Activated naive CD4-positive, alpha-beta T cell treated with anti-CD3 and anti-CD28 coated beads for 36 hours (primary cell): ENCODE measurements at regions of chr9 and their contacts with region 1.

Region 1: GRCh38 chr9:127244609-127245601 is 19.7 kb upstream of the GARNL3 start:
- DNase-seq: peak; percentile 98
- H3K4me3 Mint-ChIP-seq: peak overlapping the region; percentile 83
- H3K27ac Mint-ChIP-seq: no peak overlapping the region
- H3K4me1 Mint-ChIP-seq: peaks cover 5% of the 10 kb centered on the region
- H3K27me3 Mint-ChIP-seq: no peaks in the 10 kb centered on the region

Region 2: DNA sequence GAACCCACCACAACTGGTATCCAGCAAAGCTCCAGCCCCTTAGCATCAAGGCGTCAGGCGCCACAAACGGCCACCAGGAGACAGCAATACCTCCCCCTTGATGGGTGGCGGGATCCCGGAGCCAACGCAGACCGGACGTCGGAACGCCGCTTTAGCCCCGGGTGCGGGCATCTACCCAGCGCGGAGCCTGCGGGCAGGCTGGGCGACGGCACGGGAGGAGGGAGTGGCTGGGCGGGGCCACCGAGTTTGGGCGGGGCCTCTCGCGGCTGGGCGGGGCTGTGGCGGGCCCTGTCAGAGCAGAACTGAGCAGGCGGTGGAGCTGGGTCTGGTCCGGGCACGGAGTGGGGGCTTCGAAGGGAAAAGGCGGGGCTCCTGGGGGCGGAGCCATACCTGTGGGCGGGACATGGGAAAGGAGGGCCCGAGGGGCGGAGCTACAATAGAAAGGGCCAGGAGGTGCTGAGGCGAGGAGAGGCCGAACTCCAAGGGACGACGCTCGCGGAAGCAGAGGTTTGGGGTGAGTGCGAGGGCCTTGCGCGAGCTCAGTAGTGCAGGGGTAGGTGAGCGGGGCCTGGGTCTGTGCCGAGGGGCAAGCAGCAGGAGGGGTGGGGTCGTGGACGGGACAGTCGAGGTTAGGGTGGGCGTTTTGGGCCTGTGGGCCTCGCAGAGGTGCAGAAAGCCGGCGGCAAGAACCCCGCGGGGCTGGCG is 20.6 kb before region 1 on chr9:
- CTCF ChIA-PET with region 1: interaction called, 3 read pairs
- intact Hi-C with region 1: loop called (anchors 1 kb)
- DNase-seq: peak; percentile 85
- H3K4me3 Mint-ChIP-seq: peak overlapping the region; percentile 73
- H3K27ac Mint-ChIP-seq: no peak overlapping the region
- H3K4me1 Mint-ChIP-seq: peaks cover 28% of the 10 kb centered on the region
- H3K27me3 Mint-ChIP-seq: peaks cover 9% of the 10 kb centered on the region

Region 3: GRCh38 chr9:127263664-127264063 is 18.8 kb after region 1 on chr9:
- CTCF ChIA-PET with region 1: no interaction called
- intact Hi-C with region 1: no loop called
- DNase-seq: no peak
- H3K4me3 Mint-ChIP-seq: no peak overlapping the region
- H3K27ac Mint-ChIP-seq: no peak overlapping the region
- H3K4me1 Mint-ChIP-seq: no peaks in the 10 kb centered on the region
- H3K27me3 Mint-ChIP-seq: no peaks in the 10 kb centered on the region

Region 4: DNA sequence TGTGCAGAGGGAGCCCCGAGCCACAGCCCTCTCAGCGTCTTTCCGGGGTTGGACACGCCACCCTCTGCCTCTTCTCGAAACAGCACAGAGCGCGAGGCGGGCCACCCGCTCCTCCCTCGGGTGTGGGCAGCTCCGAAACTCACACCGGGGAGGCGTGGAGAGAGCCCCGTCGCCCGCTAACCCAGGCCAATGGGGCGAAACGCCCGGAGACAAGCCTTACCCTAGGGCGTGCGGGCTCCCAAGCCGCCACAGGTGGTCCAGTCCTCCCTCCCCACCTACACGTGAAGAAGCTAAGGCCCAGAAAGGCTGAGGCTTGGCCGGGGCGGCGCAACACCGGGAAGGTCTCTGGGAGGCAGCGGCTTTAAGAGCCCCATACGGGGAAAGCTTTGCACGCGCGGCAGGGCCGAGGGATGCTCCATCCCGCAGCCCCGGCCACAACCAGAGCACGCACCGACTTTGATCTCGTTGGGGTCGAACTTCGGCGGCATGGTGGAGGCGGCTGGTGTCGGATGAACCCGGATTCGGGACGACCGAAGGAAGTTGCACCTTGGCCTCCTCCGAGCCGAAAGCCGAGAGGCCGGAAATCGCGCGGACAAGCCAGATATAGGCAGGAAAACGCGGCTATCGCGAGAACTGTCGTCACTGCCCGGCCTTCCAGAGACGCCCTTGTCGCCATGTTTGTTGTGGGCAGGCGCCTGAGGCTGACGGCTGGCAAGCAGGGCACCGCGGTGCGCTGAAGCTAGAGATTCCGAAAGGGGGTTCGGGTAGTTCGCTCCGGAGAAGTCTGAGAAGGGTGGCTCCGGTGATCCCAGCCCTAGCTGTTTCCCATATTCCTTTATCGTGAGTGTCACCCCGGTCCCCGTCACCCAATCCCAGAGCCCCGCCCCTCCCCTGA is 206.2 kb after region 1 on chr9 and contains the starts of genes LRSAM1 and RPL12:
- CTCF ChIA-PET with region 1: interaction called, 3 read pairs
- intact Hi-C with region 1: loop called (anchors 10 kb)
- DNase-seq: peak; percentile 97
- H3K4me3 Mint-ChIP-seq: peak within 1 kb of the TSS; percentile 89
- H3K27ac Mint-ChIP-seq: peak within 1 kb of the TSS; percentile 95
- H3K4me1 Mint-ChIP-seq: peaks cover 42% of the 10 kb centered on the region
- H3K27me3 Mint-ChIP-seq: no peaks in the 10 kb centered on the region
- total RNA-seq, gene LRSAM1: 8.8 to 9.9 TPM
- total RNA-seq, gene RPL12: 3,038 to 3,119 TPM

Region 5: DNA sequence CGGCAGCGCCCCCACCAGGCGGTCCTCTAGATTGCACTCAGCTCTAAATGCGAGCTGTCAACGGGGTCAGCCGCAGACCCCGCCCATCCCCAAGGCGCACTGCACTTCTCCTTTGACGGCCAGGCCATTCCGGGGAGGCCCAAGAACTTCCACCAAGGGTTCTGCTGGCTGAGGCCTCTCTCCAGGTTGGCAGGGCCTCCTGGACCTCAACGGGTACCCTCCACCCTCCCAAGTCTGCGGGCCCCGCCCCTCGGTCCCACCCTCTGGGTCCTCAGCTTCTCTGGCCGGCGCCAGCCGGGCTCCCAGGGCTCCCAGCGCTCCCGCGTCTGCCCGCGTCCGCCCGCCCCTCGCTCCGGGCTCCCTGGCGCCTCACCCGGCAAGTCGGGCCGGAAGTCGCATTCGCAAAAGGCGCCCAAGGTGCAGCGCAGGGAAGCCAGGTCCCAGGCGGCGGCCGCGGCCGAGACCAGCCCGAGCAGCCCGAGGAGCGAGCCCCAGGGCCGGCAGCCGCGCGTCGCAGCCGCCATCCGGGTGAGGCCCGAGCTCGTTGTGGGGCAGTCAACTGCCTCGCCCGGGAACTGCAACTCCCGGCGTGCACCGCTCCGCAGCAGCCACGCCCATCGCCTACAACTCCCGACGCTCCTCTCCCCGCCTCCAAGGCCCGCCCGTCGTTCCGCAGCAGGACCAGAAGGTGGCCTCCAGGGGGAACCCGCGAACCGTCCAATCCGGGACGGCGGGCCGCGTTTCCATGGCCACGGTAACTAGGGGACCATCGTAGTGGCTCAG is 490.0 kb after region 1 on chr9 and contains the start of gene TOR2A:
- CTCF ChIA-PET with region 1: no interaction called
- intact Hi-C with region 1: no loop called
- DNase-seq: peak; percentile 98
- H3K4me3 Mint-ChIP-seq: peak within 1 kb of the TSS; percentile 78
- H3K27ac Mint-ChIP-seq: peak within 1 kb of the TSS; percentile 86
- H3K4me1 Mint-ChIP-seq: peaks cover 13% of the 10 kb centered on the region
- H3K27me3 Mint-ChIP-seq: no peaks in the 10 kb centered on the region
- total RNA-seq, gene TOR2A: 11.8 to 12.7 TPM